CD4-positive, alpha-beta memory T cell (primary cell): ENCODE measurements at regions of chr6 and their contacts with region 1.

Region 1: DNA sequence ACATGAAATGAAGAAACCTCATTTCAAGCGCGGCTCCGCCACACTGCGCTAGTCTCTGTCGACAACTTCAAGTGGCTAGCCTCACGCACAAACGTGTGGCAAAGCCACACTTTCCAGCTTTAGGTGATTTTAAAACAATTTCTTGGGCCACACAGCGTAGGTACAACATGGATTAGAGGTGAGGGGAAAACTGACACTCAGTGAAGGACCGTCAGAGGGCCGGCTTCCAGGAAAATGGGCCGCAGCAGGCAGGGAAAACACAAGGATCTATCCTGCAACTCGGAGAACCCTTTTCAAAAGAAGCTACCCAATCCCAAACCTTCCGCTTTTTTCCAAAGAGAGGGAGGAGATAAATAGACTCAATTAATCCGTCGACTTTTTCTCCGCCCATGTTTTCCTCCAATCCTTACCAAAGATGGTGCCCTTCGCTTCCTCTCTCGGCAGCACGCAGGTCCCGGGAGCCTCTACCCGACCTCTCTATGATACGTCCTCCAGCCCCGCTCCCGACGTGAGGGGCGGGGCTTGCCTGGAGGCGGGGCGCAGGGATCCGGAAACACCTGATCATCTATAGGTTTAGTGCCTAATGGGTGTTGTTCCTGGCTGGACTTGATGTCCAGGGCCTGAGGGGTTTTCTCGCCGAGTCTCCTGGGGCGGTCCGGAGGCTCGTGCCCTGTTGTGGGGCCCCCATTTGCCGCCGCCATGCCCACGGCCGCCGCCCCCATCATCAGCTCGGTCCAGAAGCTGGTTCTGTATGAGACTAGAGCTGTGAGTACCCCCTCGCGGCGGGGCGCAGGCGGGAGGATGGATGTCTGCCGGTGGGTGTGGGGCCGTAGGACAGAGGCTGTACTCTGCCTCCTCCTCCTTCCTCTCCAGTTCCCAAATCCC is at the starts of genes AK9 and FIG4:
- DNase-seq: peak; percentile 82 to 90 (median 84)
- H3K4me3 ChIP-seq: peak within 1 kb of the TSS; percentile 87 to 89
- H3K4me3 Mint-ChIP-seq: peak within 1 kb of the TSS; percentile 95 to 100 (median 99)
- H3K27ac ChIP-seq: peak within 1 kb of the TSS; percentile 74
- H3K27ac Mint-ChIP-seq: peak within 1 kb of the TSS; percentile 93 to 99 (median 97)
- H3K4me1 ChIP-seq: peaks cover 26% of the 10 kb centered on the region
- H3K4me1 Mint-ChIP-seq: peaks cover 10 to 29% (median 22%) of the 10 kb centered on the region in 4 donors
- H3K27me3 ChIP-seq: no peaks in the 10 kb centered on the region
- H3K27me3 Mint-ChIP-seq: peaks cover 0 to 2% of the 10 kb centered on the region in 2 donors
- total RNA-seq, gene AK9: 15.6 to 18.4 TPM
- total RNA-seq, gene FIG4: 14.4 to 14.8 TPM

Region 2: GRCh38 chr6:108260809-108261569 is 1430.0 kb before region 1 on chr6 and contains the start of gene SNX3:
- CTCF ChIA-PET with region 1: no interaction called
- POLR2A ChIA-PET with region 1: interaction called, 4 read pairs
- intact Hi-C with region 1: loop called (anchors 2 kb)
- DNase-seq: peak; percentile 90 to 94 (median 91)
- H3K4me3 ChIP-seq: peak within 1 kb of the TSS; percentile 93 to 98
- H3K4me3 Mint-ChIP-seq: peak within 1 kb of the TSS; percentile 86 to 97 (median 92)
- H3K27ac ChIP-seq: peak within 1 kb of the TSS; percentile 84
- H3K27ac Mint-ChIP-seq: peak within 1 kb of the TSS; percentile 89 to 97 (median 95)
- H3K4me1 ChIP-seq: peaks cover 43% of the 10 kb centered on the region
- H3K4me1 Mint-ChIP-seq: peaks cover 15 to 38% (median 27%) of the 10 kb centered on the region in 4 donors
- H3K27me3 ChIP-seq: no peaks in the 10 kb centered on the region
- H3K27me3 Mint-ChIP-seq: peaks cover 0 to 2% of the 10 kb centered on the region in 2 donors
- total RNA-seq, gene SNX3: 65.9 to 66.6 TPM

Region 3: GRCh38 chr6:109440331-109441068 is 250.5 kb before region 1 on chr6 and contains the starts of genes PPIL6 and SMPD2:
- CTCF ChIA-PET with region 1: interaction called, 3 read pairs
- POLR2A ChIA-PET with region 1: interaction called, 6 read pairs
- intact Hi-C with region 1: loop called (anchors 1 kb)
- DNase-seq: peak; percentile 77 to 84 (median 80)
- H3K4me3 ChIP-seq: peak within 1 kb of the TSS; percentile 69 to 82
- H3K4me3 Mint-ChIP-seq: peak within 1 kb of the TSS; percentile 91 to 98 (median 94)
- H3K27ac ChIP-seq: peak within 1 kb of the TSS; percentile 89
- H3K27ac Mint-ChIP-seq: peak within 1 kb of the TSS; percentile 96 to 98 (median 97)
- H3K4me1 ChIP-seq: peaks cover 25% of the 10 kb centered on the region
- H3K4me1 Mint-ChIP-seq: peaks cover 15 to 32% (median 21%) of the 10 kb centered on the region in 4 donors
- H3K27me3 ChIP-seq: no peaks in the 10 kb centered on the region
- H3K27me3 Mint-ChIP-seq: no peaks in the 10 kb centered on the region
- total RNA-seq, gene PPIL6: 0.39 to 0.52 TPM
- total RNA-seq, gene SMPD2: 21.7 to 23.6 TPM

Region 4: GRCh38 chr6:109526905-109527628 is 163.9 kb before region 1 on chr6:
- CTCF ChIA-PET with region 1: no interaction called
- POLR2A ChIA-PET with region 1: no interaction called
- intact Hi-C with region 1: loop called (anchors 10 kb)
- DNase-seq: peak; percentile 48 to 64 (median 52)
- H3K4me3 ChIP-seq: no peak overlapping the region
- H3K4me3 Mint-ChIP-seq: no peak overlapping the region
- H3K27ac ChIP-seq: no peak overlapping the region
- H3K27ac Mint-ChIP-seq: peak overlapping the region in 2 of 7 donors; percentile 2 to 52
- H3K4me1 ChIP-seq: no peaks in the 10 kb centered on the region
- H3K4me1 Mint-ChIP-seq: peaks cover 0 to 3% (median 0%) of the 10 kb centered on the region in 4 donors
- H3K27me3 ChIP-seq: no peaks in the 10 kb centered on the region
- H3K27me3 Mint-ChIP-seq: peaks cover 0 to 3% of the 10 kb centered on the region in 2 donors

Region 5: DNA sequence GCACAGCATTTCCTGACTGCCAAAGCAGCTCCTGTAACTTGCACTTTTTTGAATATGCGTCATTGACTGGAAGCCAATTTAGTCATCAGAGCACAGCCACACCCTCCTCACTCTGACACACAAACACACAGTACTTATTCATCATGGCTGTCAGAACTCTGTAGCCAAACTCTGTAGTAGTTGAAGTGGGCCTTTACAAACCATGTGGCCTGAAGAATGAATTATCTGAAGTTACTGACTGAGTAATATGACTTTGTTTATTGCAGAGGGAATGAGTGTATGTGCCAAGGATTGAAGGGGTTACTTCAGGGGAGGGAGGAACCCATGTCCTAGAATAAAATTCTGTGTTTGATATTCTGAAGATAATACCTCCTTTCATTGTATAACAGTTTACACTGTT is 102.8 kb after region 1 on chr6:
- CTCF ChIA-PET with region 1: no interaction called
- POLR2A ChIA-PET with region 1: no interaction called
- intact Hi-C with region 1: no loop called
- DNase-seq: no peak
- H3K4me3 ChIP-seq: no peak overlapping the region
- H3K4me3 Mint-ChIP-seq: no peak overlapping the region
- H3K27ac ChIP-seq: no peak overlapping the region
- H3K27ac Mint-ChIP-seq: no peak overlapping the region
- H3K4me1 ChIP-seq: no peaks in the 10 kb centered on the region
- H3K4me1 Mint-ChIP-seq: no peaks in the 10 kb centered on the region
- H3K27me3 ChIP-seq: no peaks in the 10 kb centered on the region
- H3K27me3 Mint-ChIP-seq: no peaks in the 10 kb centered on the region

Region 6: GRCh38 chr6:110179401-110180227 is 488.6 kb after region 1 on chr6 and contains the start of gene WASF1:
- CTCF ChIA-PET with region 1: interaction called, 4 read pairs
- POLR2A ChIA-PET with region 1: interaction called, 12 read pairs
- intact Hi-C with region 1: loop called (anchors 1 kb)
- DNase-seq: peak; percentile 90 to 93 (median 92)
- H3K4me3 ChIP-seq: peak within 1 kb of the TSS; percentile 77 to 92
- H3K4me3 Mint-ChIP-seq: peak within 1 kb of the TSS; percentile 82 to 92 (median 86)
- H3K27ac ChIP-seq: peak within 1 kb of the TSS; percentile 88
- H3K27ac Mint-ChIP-seq: peak within 1 kb of the TSS; percentile 24 to 90 (median 64)
- H3K4me1 ChIP-seq: peaks cover 46% of the 10 kb centered on the region
- H3K4me1 Mint-ChIP-seq: peaks cover 5 to 7% (median 6%) of the 10 kb centered on the region in 4 donors
- H3K27me3 ChIP-seq: no peaks in the 10 kb centered on the region
- H3K27me3 Mint-ChIP-seq: peaks cover 4 to 5% of the 10 kb centered on the region in 2 donors
- total RNA-seq, gene WASF1: 0.39 to 0.70 TPM